Head of caudate nucleus (tissue), 42 donors: ENCODE measurements at regions of chr4 and their contacts with region 1.

Region 1: GRCh38 chr4:78517050-78517652 is 34.4 kb upstream of the ANXA3 start:
- DNase-seq: peak in 1 of 42 donors; percentile 22

Region 2: DNA sequence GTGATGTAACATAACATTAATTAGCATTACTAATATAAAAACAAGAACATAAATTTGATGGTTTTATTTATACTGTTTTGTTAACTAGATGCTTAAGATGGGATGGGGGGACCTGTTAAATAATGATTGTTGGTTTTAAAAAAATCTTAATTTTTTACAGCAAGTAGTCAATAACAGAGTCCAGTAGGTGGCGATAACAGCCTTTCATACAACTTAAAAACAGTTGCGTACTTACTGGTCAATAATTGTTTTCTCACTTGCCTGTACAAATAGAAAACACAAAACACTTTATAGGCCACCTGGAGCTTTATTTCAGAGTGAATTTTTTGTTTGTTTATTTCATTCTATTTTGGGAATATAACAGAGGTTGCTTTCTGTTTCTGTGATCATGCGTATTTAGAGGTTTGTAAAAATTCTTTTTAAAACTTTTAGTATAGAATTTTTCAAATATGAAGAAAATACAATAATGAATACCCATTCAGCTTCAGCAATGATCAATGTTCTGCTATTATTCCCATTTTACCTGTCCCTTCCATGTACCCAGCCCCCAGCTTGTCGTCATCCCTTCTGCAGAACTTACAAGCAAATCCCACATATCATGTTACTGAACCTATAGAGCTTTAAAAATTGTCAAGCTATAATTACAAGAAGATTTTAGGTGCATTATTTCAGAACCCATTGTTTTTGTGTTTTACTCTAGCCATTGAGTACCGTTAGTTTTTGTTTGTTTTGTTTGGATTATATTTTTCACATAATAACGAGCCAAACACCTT is 557.4 kb before region 1 on chr4:
- intact Hi-C with region 1: loop called (anchors 10 kb)
- DNase-seq: peak in 3 of 42 donors; percentile 5 to 17 (median 15)

Region 3: GRCh38 chr4:78704981-78705683 is 188.0 kb after region 1 on chr4:
- intact Hi-C with region 1: no loop called
- DNase-seq: peak in 12 of 42 donors; percentile 8 to 62 (median 30)